ENCODE measurements at regions of chr17 and their contacts with region 1.

Region 1: GRCh38 chr17:32253117-32253611 is 12.5 kb upstream of the RHBDL3 start:
- DNase-seq: peak; percentile 80 to 84
- ATAC-seq: peak; percentile 98
- H3K4me3 ChIP-seq: no peak overlapping the region
- H3K27ac ChIP-seq: no peak overlapping the region
- H3K4me1 ChIP-seq: no peaks in the 10 kb centered on the region
- CTCF ChIP-seq: peak; percentile 99
- EP300 ChIP-seq: no peak
- POLR2A ChIP-seq: no peak
- RAD21 ChIP-seq: peak; percentile 98 to 100

Region 2: GRCh38 chr17:31931756-31932155 is 321.4 kb before region 1 on chr17:
- CTCF ChIA-PET with region 1: no interaction called
- POLR2A ChIA-PET with region 1: no interaction called
- DNase-seq: no peak
- ATAC-seq: no peak
- H3K4me3 ChIP-seq: no peak overlapping the region
- H3K27ac ChIP-seq: no peak overlapping the region
- H3K4me1 ChIP-seq: no peaks in the 10 kb centered on the region
- CTCF ChIP-seq: no peak
- EP300 ChIP-seq: no peak; a peak in 1 of 5 replicates
- POLR2A ChIP-seq: no peak
- RAD21 ChIP-seq: no peak

Region 3: DNA sequence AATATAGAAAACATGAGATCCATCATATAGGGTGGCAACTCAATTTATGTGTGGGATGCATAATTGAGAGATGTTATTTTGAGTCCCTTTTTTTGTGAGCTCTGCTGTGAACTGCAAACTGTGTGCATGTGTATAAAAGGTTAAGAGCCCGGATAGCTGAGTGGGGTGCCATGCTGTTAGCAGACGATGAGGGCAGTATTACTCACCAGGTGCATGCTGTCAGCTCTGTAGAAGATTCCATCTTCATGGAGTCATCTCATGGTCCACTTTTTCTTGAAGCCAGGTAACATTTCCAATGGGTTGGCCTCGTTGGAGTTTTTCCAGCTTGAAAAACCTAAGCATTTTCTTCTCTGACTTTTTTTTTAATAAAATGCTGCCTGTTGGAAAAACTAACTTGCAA is 30.5 kb before region 1 on chr17:
- CTCF ChIA-PET with region 1: interaction called, 14 read pairs
- POLR2A ChIA-PET with region 1: no interaction called
- DNase-seq: peak; percentile 24 to 62
- ATAC-seq: peak; percentile 88 to 97
- H3K4me3 ChIP-seq: no peak overlapping the region
- H3K27ac ChIP-seq: no peak overlapping the region
- H3K4me1 ChIP-seq: peaks cover 7% of the 10 kb centered on the region
- CTCF ChIP-seq: 0 out of 3 replicates have a peak, but pooled peaks have one; percentile 8
- EP300 ChIP-seq: no peak
- POLR2A ChIP-seq: no peak
- RAD21 ChIP-seq: no peak

Region 4: GRCh38 chr17:32240750-32241149 is 12.4 kb before region 1 on chr17:
- CTCF ChIA-PET with region 1: interaction called, 38 read pairs
- POLR2A ChIA-PET with region 1: interaction called, 11 read pairs
- DNase-seq: no peak
- ATAC-seq: peak in 1 of 2 experiments; percentile 51; a peak in 2 of 6 replicates
- H3K4me3 ChIP-seq: no peak overlapping the region
- H3K27ac ChIP-seq: no peak overlapping the region
- H3K4me1 ChIP-seq: no peaks in the 10 kb centered on the region
- CTCF ChIP-seq: no peak
- EP300 ChIP-seq: no peak
- POLR2A ChIP-seq: no peak
- RAD21 ChIP-seq: no peak

Region 5: GRCh38 chr17:32271844-32272243 is 18.7 kb after region 1 on chr17:
- CTCF ChIA-PET with region 1: interaction called, 10 read pairs
- POLR2A ChIA-PET with region 1: no interaction called
- DNase-seq: no peak
- ATAC-seq: no peak
- H3K4me3 ChIP-seq: no peak overlapping the region
- H3K27ac ChIP-seq: peak overlapping the region in 1 of 2 experiments; percentile 54; a peak in 3 of 6 replicates
- H3K4me1 ChIP-seq: peaks cover 69% of the 10 kb centered on the region
- CTCF ChIP-seq: no peak
- EP300 ChIP-seq: no peak
- POLR2A ChIP-seq: no peak
- RAD21 ChIP-seq: no peak

Region 6: GRCh38 chr17:32298298-32298697 is 45.1 kb after region 1 on chr17:
- CTCF ChIA-PET with region 1: interaction called, 31 read pairs
- POLR2A ChIA-PET with region 1: no interaction called
- DNase-seq: peak in 1 of 2 experiments; percentile 23
- ATAC-seq: peak; percentile 49 to 70; a peak in 5 of 6 replicates
- H3K4me3 ChIP-seq: no peak overlapping the region
- H3K27ac ChIP-seq: no peak overlapping the region
- H3K4me1 ChIP-seq: no peaks in the 10 kb centered on the region
- CTCF ChIP-seq: no peak
- EP300 ChIP-seq: no peak
- POLR2A ChIP-seq: no peak
- RAD21 ChIP-seq: no peak

Region 7: DNA sequence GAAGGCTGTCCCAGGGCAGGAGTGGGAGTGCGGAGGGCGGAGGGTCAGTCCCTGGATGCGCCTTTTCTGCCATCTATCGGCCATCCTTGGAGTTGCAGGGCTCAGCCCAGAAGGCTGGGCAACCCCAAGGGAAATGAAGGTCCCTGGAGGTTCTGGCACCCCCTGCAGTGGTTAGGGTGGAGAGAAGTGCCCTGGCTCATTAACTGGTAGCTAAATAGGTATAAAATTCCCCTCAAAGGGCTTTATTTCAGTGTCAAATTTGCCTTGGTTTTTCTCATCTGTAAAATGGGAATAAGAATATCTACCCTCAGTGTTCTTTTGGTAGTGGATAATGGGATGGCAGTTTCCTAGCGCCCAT is 66.4 kb after region 1 on chr17:
- CTCF ChIA-PET with region 1: interaction called, 259 read pairs
- POLR2A ChIA-PET with region 1: no interaction called
- DNase-seq: peak; percentile 69 to 88
- ATAC-seq: peak; percentile 89 to 96
- H3K4me3 ChIP-seq: no peak overlapping the region
- H3K27ac ChIP-seq: no peak overlapping the region
- H3K4me1 ChIP-seq: no peaks in the 10 kb centered on the region
- CTCF ChIP-seq: peak; percentile 94
- EP300 ChIP-seq: no peak
- POLR2A ChIP-seq: no peak
- RAD21 ChIP-seq: peak; percentile 97 to 98